ENCODE measurements at regions of chr22 and their contacts with region 1.

Region 1: DNA sequence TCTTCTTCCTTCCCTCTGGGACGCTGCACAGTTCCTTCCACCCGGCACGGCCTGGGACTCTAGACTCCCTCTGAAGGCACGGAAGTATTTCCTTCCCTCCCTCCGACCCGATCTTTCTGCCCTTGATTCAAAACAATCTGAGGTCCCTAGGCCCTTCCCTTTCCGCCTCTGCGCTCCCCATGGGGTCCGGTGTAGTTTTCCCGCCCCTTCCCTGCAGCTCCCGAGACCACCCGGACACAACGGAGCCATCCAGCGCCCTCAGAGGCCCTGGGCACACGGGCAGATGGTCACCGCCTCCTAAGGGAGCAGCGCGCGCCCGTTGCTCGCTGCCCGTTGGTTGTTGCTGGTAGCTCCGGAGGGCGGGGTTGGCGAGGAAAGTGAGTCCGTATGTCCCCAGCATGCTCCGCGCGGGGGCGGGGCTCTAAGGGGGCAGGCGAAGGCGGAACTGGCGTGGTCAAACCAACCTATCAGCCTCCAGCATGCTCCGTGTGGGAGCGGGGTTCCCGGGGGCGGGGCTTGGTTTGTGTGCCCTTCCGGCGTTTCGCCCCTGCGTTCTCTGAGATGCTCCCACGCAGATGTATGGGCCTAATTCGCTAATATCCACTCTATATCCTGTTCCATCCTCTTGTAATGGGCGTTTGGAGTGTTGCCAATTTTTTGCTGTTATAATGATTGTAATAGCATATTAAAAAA is 19.6 kb downstream of the MIF start:
- DNase-seq: peak; percentile 100
- ATAC-seq: peak; percentile 99 to 100 (median 100)
- H3K4me3 ChIP-seq: peak overlapping the region; percentile 22 to 66 (median 61)
- H3K27ac ChIP-seq: peak overlapping the region; percentile 77 to 93 (median 86)
- H3K4me1 ChIP-seq: peaks cover 5 to 26% (median 16%) of the 10 kb centered on the region in 9 donors
- H3K27me3 ChIP-seq: no peaks in the 10 kb centered on the region
- CTCF ChIP-seq: no peak

Region 2: DNA sequence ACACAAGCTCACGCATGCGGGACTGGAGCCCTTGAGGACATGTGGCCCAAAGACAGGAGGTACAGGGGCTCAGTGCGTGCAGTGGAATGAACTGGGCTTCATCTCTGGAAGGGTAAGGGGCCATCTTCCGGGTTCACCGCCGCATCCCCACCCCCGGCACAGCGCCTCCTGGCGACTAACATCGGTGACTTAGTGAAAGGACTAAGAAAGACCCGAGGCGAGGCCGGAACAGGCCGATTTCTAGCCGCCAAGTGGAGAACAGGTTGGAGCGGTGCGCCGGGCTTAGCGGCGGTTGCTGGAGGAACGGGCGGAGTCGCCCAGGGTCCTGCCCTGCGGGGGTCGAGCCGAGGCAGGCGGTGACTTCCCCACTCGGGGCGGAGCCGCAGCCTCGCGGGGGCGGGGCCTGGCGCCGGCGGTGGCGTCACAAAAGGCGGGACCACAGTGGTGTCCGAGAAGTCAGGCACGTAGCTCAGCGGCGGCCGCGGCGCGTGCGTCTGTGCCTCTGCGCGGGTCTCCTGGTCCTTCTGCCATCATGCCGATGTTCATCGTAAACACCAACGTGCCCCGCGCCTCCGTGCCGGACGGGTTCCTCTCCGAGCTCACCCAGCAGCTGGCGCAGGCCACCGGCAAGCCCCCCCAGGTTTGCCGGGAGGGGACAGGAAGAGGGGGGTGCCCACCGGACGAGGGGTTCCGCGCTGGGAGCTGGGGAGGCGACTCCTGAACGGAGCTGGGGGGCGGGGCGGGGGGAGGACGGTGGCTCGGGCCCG is 19.7 kb before region 1 on chr22 and contains the start of gene MIF:
- intact Hi-C with region 1: loop called in 1 of 10 experiments (anchors 1 kb)
- DNase-seq: peak; percentile 94 to 97
- ATAC-seq: peak; percentile 91 to 98 (median 95)
- H3K4me3 ChIP-seq: peak within 1 kb of the TSS; percentile 49 to 88 (median 70)
- H3K27ac ChIP-seq: peak within 1 kb of the TSS; percentile 71 to 99 (median 92)
- H3K4me1 ChIP-seq: peaks cover 7 to 42% (median 25%) of the 10 kb centered on the region in 9 donors
- H3K27me3 ChIP-seq: no peaks in the 10 kb centered on the region
- CTCF ChIP-seq: peak; percentile 33 to 83 (median 68)
- total RNA-seq, gene MIF: 135 to 457 (median 225) TPM

Region 3: GRCh38 chr22:23970816-23971486 is 57.1 kb after region 1 on chr22:
- intact Hi-C with region 1: loop called in 1 of 10 experiments (anchors 10 kb)
- DNase-seq: no peak
- ATAC-seq: no peak
- H3K4me3 ChIP-seq: no peak overlapping the region
- H3K27ac ChIP-seq: no peak overlapping the region
- H3K4me1 ChIP-seq: peaks cover 0 to 23% (median 0%) of the 10 kb centered on the region in 9 donors
- H3K27me3 ChIP-seq: no peaks in the 10 kb centered on the region
- CTCF ChIP-seq: no peak

Region 4: GRCh38 chr22:24555157-24556039 is 641.6 kb after region 1 on chr22 and contains the start of gene SNRPD3:
- intact Hi-C with region 1: loop called in 1 of 10 experiments (anchors 10 kb)
- DNase-seq: peak; percentile 100
- ATAC-seq: peak; percentile 90 to 97 (median 94)
- H3K4me3 ChIP-seq: peak within 1 kb of the TSS; percentile 68 to 100 (median 92)
- H3K27ac ChIP-seq: peak within 1 kb of the TSS; percentile 94 to 99 (median 98)
- H3K4me1 ChIP-seq: peaks cover 7 to 76% (median 65%) of the 10 kb centered on the region in 9 donors
- H3K27me3 ChIP-seq: no peaks in the 10 kb centered on the region
- CTCF ChIP-seq: peak in 6 of 9 donors; percentile 9 to 28 (median 19)
- total RNA-seq, gene SNRPD3: 67.0 to 89.4 (median 74.0) TPM